ENCODE measurements at regions of chrX and their contacts with region 1.

Region 1: DNA sequence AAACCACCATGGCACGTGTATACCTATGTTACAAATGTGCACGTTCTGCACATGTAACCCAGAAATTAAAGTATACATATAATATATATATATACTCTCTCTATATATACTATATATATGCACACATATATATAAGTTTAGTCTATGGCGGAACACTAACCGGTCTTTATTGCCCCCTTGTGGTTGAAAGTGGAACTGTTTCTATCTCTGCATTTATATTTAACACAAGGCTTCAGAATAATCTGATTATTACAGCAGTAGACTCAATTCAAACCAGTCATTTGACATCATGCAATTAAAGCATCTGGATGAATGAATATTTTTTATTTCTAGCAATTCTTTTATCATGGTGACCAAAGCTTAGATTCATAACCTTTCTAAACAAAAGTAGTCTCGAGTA is 14.6 kb downstream of the RAB9B start:
- DNase-seq: peak; percentile 10
- ATAC-seq: no peak
- H3K4me3 ChIP-seq: no peak overlapping the region
- H3K27ac ChIP-seq: no peak overlapping the region
- H3K4me1 ChIP-seq: no peaks in the 10 kb centered on the region
- H3K27me3 ChIP-seq: no peaks in the 10 kb centered on the region
- CTCF ChIP-seq: peak; percentile 42; the same call in 1 of the 2 replicates
- EP300 ChIP-seq: no peak
- POLR2A ChIP-seq: no peak
- RAD21 ChIP-seq: no peak

Region 2: GRCh38 chrX:103533511-103534216 is 283.8 kb before region 1 on chrX:
- CTCF ChIA-PET with region 1: no interaction called
- POLR2A ChIA-PET with region 1: no interaction called
- in situ Hi-C with region 1: loop called (anchors 25 kb)
- intact Hi-C with region 1: loop called (anchors 1 kb)
- DNase-seq: peak; percentile 43
- ATAC-seq: peak; percentile 81
- H3K4me3 ChIP-seq: peak overlapping the region; percentile 2 to 65 (median 49); a peak in 5 of 6 replicates
- H3K27ac ChIP-seq: no peak overlapping the region
- H3K4me1 ChIP-seq: no peaks in the 10 kb centered on the region
- H3K27me3 ChIP-seq: no peaks in the 10 kb centered on the region
- CTCF ChIP-seq: peak; percentile 75
- EP300 ChIP-seq: no peak
- POLR2A ChIP-seq: no peak
- RAD21 ChIP-seq: 0 out of 2 replicates have a peak, but pooled peaks have one; percentile 18

Region 3: DNA sequence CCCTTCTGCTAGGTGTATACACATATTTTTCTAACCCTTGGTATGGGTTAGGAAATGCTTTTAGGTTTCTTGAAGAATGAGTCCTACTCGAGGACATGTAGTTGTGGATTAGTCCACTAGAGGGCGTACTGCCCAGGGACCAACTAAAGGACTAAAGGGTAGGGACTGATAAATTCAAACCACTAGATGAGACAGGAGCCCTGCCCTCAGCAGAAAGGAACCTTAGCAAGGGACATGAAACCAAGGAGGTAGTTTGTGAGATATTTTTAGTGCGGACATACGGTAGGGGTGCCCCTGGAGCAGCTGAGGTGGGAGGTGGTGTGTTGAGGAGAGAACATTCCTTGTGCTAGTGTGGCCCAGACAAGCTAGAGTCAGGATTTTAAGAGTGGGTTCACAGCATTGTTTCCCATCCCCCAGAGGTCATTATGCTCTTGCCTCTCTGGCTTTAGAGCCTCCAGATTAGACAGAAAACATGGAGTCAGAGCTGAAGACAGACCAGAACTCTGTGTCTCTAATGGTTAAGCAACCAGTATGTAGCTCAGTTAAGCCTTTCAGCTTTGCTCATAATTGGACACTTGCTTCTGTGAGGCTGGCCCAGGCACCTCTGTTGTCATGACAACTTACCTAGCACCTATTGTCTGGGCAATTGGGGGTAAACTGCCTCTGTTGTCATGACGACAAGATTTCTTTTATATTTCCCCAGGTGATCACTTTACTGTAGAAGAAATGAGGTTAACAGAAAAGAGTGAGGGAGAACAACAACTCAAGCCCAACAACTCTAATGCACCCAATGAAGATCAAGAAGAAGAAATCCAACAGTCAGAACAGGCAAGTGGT is 105.8 kb before region 1 on chrX:
- CTCF ChIA-PET with region 1: no interaction called
- POLR2A ChIA-PET with region 1: no interaction called
- in situ Hi-C with region 1: no loop called
- intact Hi-C with region 1: loop called (anchors 2 kb)
- DNase-seq: peak; percentile 23
- ATAC-seq: peak; percentile 54
- H3K4me3 ChIP-seq: no peak overlapping the region
- H3K27ac ChIP-seq: no peak overlapping the region
- H3K4me1 ChIP-seq: no peaks in the 10 kb centered on the region
- H3K27me3 ChIP-seq: no peaks in the 10 kb centered on the region
- CTCF ChIP-seq: peak; percentile 56
- EP300 ChIP-seq: no peak
- POLR2A ChIP-seq: no peak
- RAD21 ChIP-seq: no peak

Region 4: GRCh38 chrX:103831803-103832544 is 14.5 kb after region 1 on chrX and contains the start of gene RAB9B:
- CTCF ChIA-PET with region 1: no interaction called
- POLR2A ChIA-PET with region 1: no interaction called
- in situ Hi-C with region 1: no loop called
- intact Hi-C with region 1: no loop called
- DNase-seq: no peak
- ATAC-seq: peak; percentile 69
- H3K4me3 ChIP-seq: peak within 1 kb of the TSS; percentile 15 to 66 (median 52); a peak in 4 of 6 replicates
- H3K27ac ChIP-seq: no peak within 1 kb of the TSS
- H3K4me1 ChIP-seq: no peaks in the 10 kb centered on the region
- H3K27me3 ChIP-seq: peaks cover 0 to 11% of the 10 kb centered on the region in 2 experiments; a peak in 3 of 5 replicates
- CTCF ChIP-seq: no peak
- EP300 ChIP-seq: no peak
- POLR2A ChIP-seq: no peak
- RAD21 ChIP-seq: no peak
- total RNA-seq, gene RAB9B: 0.04 TPM in 2 replicates

Region 5: DNA sequence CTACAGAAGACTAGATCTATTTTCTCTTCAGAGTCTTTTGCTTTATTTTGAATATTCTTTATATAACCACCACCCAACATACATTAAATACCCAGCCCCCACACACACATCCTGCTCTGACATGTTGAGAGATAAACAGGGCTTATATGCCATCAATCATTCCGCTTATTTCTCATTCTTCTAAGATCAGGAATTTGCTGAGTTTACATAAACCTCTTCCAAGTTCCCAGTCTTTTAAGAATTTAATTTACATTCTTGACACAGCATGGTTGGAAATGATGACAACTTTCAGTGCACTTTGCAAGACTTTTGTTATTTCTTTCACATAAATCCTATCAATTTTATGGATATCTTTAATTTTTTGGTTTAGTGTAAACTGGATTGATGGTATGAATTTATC is 32.1 kb after region 1 on chrX:
- CTCF ChIA-PET with region 1: no interaction called
- POLR2A ChIA-PET with region 1: no interaction called
- in situ Hi-C with region 1: no loop called
- intact Hi-C with region 1: no loop called
- DNase-seq: no peak
- ATAC-seq: no peak
- H3K4me3 ChIP-seq: no peak overlapping the region
- H3K27ac ChIP-seq: no peak overlapping the region
- H3K4me1 ChIP-seq: no peaks in the 10 kb centered on the region
- H3K27me3 ChIP-seq: no peaks in the 10 kb centered on the region
- CTCF ChIP-seq: no peak
- EP300 ChIP-seq: no peak
- POLR2A ChIP-seq: no peak
- RAD21 ChIP-seq: no peak